Lower leg skin (tissue), 4 donors: ENCODE measurements at regions of chr10 and their contacts with region 1.

Region 1: DNA sequence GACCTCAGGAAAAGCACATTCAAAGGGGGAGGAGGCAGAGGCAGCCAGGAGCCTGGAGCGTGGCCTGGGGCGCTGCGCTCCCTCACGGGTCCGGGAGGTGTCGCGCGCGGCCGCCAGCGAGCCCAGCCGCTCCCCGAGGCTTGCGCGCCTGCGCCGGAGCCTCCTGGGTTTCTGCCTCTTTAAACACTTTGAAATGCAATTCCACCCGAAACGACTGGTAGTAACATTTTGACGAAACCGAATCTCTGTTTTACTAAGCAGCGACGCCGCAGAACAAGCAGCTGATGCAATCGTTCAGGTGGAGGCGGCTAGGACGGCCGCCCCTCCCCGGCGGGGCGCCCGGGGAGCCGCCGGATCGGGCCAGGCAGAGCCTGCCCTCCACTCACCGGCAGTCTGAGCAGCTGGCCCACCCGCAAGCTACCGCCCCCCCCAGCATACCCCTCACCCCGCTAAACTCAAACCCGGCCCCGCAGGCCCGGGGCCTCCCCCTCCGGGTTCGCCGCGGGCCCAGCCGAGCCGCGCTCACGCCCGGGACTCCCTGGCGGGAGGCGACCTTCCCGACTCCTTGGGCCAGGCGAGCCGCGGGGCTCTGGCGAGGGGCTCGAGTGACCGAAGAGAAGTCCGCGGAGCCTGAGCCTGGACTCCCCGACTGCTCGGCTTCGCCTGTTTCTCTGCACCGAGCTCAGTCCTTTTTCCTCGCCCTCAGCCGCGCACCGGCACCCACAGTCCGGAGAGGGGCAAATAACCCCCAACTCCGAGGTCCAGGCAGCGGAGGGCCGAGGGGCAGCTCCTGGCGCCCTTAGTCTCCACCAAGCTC is 3.2 kb downstream of the MKX start:
- DNase-seq: peak; percentile 62 to 94
- H3K4me3 ChIP-seq: peak overlapping the region; percentile 45
- CTCF ChIP-seq: no peak
- POLR2A ChIP-seq: no peak

Region 2: GRCh38 chr10:28263136-28263820 is 520.9 kb after region 1 on chr10:
- intact Hi-C with region 1: no loop called
- DNase-seq: no peak
- H3K4me3 ChIP-seq: no peak overlapping the region
- CTCF ChIP-seq: no peak
- POLR2A ChIP-seq: no peak

Region 3: DNA sequence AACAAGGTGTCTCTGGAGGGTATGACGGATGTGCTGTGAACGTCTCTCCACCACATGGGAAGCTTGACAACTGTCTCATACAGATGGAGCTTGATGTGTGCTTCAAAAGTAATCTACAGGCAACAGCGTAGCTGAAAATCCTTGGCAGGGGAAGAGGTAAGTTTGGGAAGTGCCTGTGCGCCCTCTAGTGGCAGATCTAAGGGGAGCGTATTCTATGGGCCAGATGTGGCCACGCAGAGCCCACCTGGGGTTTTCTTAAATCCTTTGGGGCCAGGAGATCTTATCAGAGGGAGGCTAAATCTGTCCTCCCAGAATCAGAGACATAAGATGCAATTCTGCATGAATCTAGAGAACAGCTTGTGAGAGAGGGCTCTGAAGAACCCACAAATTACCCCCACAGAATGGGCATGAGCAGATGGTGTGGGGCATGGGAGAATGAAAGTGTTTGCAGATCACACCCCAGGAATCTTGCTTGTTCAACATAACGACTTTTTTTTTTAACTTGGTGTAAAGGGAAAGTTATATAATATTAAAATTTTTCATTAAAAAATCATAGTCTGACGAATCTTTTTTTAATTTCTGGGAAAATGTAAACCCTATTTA is 651.7 kb after region 1 on chr10:
- intact Hi-C with region 1: loop called (anchors 10 kb)
- DNase-seq: peak; percentile 61 to 91
- H3K4me3 ChIP-seq: no peak overlapping the region
- CTCF ChIP-seq: no peak
- POLR2A ChIP-seq: no peak